Caco-2 (cell line): ENCODE measurements at regions of chr10 and their contacts with region 1.

Region 1: DNA sequence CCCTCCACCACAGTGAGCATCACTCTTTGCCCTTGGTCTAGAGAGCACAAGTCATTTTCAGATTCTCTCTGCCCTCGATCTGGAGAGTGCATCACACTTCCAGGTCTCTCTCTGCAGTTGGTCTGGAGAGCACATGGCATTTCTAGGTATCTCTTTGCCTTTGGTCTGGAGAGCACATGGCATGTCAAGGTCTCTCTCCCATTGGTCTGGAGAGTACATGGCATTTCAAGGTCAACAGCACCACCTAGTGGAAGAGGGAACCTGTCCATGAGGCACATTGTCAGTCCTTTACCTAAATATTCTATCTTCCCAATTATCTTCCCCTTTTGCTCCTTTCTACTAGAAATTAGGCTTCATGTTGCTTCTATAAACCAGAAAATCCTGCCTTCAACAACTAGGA is 1139.4 kb downstream of the XPNPEP1 start:
- DNase-seq: peak; percentile 49 to 71
- H3K4me3 ChIP-seq: no peak overlapping the region
- H3K4me3 Mint-ChIP-seq: no peak overlapping the region
- H3K27ac Mint-ChIP-seq: no peak overlapping the region
- H3K4me1 ChIP-seq: no peaks in the 10 kb centered on the region
- H3K4me1 Mint-ChIP-seq: no peaks in the 10 kb centered on the region
- H3K27me3 ChIP-seq: no peaks in the 10 kb centered on the region
- H3K27me3 Mint-ChIP-seq: no peaks in the 10 kb centered on the region
- CTCF ChIP-seq: peak; percentile 42 to 59

Region 2: DNA sequence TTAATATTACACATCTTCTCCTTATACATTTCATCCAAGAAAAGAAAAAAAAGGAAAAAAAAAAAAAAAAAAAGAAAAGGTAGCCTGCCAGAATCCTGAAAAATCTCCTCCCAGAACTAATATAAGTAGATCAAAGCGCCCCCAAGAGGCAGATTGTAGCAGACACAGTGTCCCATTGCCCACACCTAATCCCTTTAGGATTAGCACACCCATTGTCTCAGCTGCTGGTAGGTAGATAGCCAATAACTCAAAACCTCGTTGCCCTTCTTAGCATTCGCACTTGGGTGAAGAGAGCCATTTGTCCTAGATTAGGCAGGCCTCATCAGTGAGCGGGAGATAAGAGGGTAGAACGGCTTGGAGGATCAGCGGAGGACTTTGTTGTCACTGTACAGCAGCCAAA is 1519.2 kb before region 1 on chr10:
- CTCF ChIA-PET with region 1: no interaction called
- POLR2A ChIA-PET with region 1: no interaction called
- intact Hi-C with region 1: no loop called
- DNase-seq: peak in 1 of 2 experiments; percentile 1
- H3K4me3 ChIP-seq: no peak overlapping the region
- H3K4me3 Mint-ChIP-seq: no peak overlapping the region
- H3K27ac Mint-ChIP-seq: no peak overlapping the region
- H3K4me1 ChIP-seq: no peaks in the 10 kb centered on the region
- H3K4me1 Mint-ChIP-seq: no peaks in the 10 kb centered on the region
- H3K27me3 ChIP-seq: no peaks in the 10 kb centered on the region
- H3K27me3 Mint-ChIP-seq: peaks cover 3% of the 10 kb centered on the region
- CTCF ChIP-seq: no peak

Region 3: GRCh38 chr10:107418407-107418806 is 1365.5 kb before region 1 on chr10:
- CTCF ChIA-PET with region 1: no interaction called
- POLR2A ChIA-PET with region 1: no interaction called
- intact Hi-C with region 1: loop called (anchors 10 kb)
- DNase-seq: no peak
- H3K4me3 ChIP-seq: no peak overlapping the region
- H3K4me3 Mint-ChIP-seq: no peak overlapping the region
- H3K27ac Mint-ChIP-seq: no peak overlapping the region
- H3K4me1 ChIP-seq: no peaks in the 10 kb centered on the region
- H3K4me1 Mint-ChIP-seq: no peaks in the 10 kb centered on the region
- H3K27me3 ChIP-seq: no peaks in the 10 kb centered on the region
- H3K27me3 Mint-ChIP-seq: no peaks in the 10 kb centered on the region
- CTCF ChIP-seq: no peak

Region 4: GRCh38 chr10:108112219-108112618 is 671.7 kb before region 1 on chr10:
- CTCF ChIA-PET with region 1: no interaction called
- POLR2A ChIA-PET with region 1: no interaction called
- intact Hi-C with region 1: loop called (anchors 5 kb)
- DNase-seq: no peak
- H3K4me3 ChIP-seq: no peak overlapping the region
- H3K4me3 Mint-ChIP-seq: no peak overlapping the region
- H3K27ac Mint-ChIP-seq: no peak overlapping the region
- H3K4me1 ChIP-seq: no peaks in the 10 kb centered on the region
- H3K4me1 Mint-ChIP-seq: no peaks in the 10 kb centered on the region
- H3K27me3 ChIP-seq: no peaks in the 10 kb centered on the region
- H3K27me3 Mint-ChIP-seq: no peaks in the 10 kb centered on the region
- CTCF ChIP-seq: no peak

Region 5: GRCh38 chr10:108591415-108591814 is 192.5 kb before region 1 on chr10:
- CTCF ChIA-PET with region 1: no interaction called
- POLR2A ChIA-PET with region 1: no interaction called
- intact Hi-C with region 1: no loop called
- DNase-seq: no peak
- H3K4me3 ChIP-seq: no peak overlapping the region
- H3K4me3 Mint-ChIP-seq: no peak overlapping the region
- H3K27ac Mint-ChIP-seq: no peak overlapping the region
- H3K4me1 ChIP-seq: peaks cover 11% of the 10 kb centered on the region
- H3K4me1 Mint-ChIP-seq: peaks cover 6% of the 10 kb centered on the region
- H3K27me3 ChIP-seq: no peaks in the 10 kb centered on the region
- H3K27me3 Mint-ChIP-seq: no peaks in the 10 kb centered on the region
- CTCF ChIP-seq: no peak

Region 6: GRCh38 chr10:109427411-109427810 is 643.5 kb after region 1 on chr10:
- CTCF ChIA-PET with region 1: no interaction called
- POLR2A ChIA-PET with region 1: no interaction called
- intact Hi-C with region 1: loop called (anchors 10 kb)
- DNase-seq: peak in 1 of 2 experiments; percentile 12
- H3K4me3 ChIP-seq: no peak overlapping the region
- H3K4me3 Mint-ChIP-seq: no peak overlapping the region
- H3K27ac Mint-ChIP-seq: no peak overlapping the region
- H3K4me1 ChIP-seq: no peaks in the 10 kb centered on the region
- H3K4me1 Mint-ChIP-seq: no peaks in the 10 kb centered on the region
- H3K27me3 ChIP-seq: no peaks in the 10 kb centered on the region
- H3K27me3 Mint-ChIP-seq: no peaks in the 10 kb centered on the region
- CTCF ChIP-seq: peak; percentile 17 to 29